ENCODE measurements at regions of chr2 and their contacts with region 1.

Region 1: GRCh38 chr2:12293874-12294273 is 422.9 kb upstream of the TRIB2 start:
- DNase-seq: no peak
- H3K4me3 ChIP-seq: no peak overlapping the region
- H3K27ac ChIP-seq: no peak overlapping the region
- H3K4me1 ChIP-seq: no peaks in the 10 kb centered on the region
- H3K27me3 ChIP-seq: no peaks in the 10 kb centered on the region
- CTCF ChIP-seq: no peak

Region 2: DNA sequence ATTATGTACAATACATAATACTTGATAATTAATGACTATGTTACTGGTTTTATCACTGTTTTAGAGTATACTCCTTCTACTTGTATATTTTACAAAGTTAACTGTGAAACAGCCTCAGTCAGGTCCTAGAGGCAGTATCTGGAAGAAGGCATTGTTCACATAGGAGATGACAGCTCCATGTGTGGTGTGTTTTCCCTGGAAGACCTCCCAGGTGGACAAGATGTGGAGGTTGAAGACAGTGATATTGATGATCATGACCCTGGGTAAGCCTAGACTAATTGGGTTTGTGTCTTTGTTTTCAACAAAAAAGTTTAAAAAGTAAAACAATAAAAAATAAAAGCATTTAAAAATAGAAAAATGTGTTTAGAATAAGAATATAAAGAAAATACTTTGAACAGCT is 519.3 kb after region 1 on chr2:
- CTCF ChIA-PET with region 1: interaction called, 10 read pairs
- dilution Hi-C with region 1: no loop called
- in situ Hi-C with region 1: no loop called
- intact Hi-C with region 1: no loop called
- DNase-seq: no peak
- H3K4me3 ChIP-seq: no peak overlapping the region
- H3K27ac ChIP-seq: no peak overlapping the region
- H3K4me1 ChIP-seq: peaks cover 11% of the 10 kb centered on the region
- H3K27me3 ChIP-seq: no peaks in the 10 kb centered on the region
- CTCF ChIP-seq: no peak

Measured in mammary epithelial cell (primary cell).